Activated naive CD4-positive, alpha-beta T cell treated with anti-CD3 and anti-CD28 coated beads, Interleukin-2, amount 10 ng/mL, durations not matched to agents 7 days and 5 days (primary cell): ENCODE measurements at regions of chr5 and their contacts with region 1.

Region 1: GRCh38 chr5:32076699-32077695 is 97.1 kb downstream of the GOLPH3 start:
- DNase-seq: peak; percentile 58
- H3K4me3 Mint-ChIP-seq: no peak overlapping the region
- H3K27ac Mint-ChIP-seq: no peak overlapping the region
- H3K4me1 Mint-ChIP-seq: no peaks in the 10 kb centered on the region
- H3K27me3 Mint-ChIP-seq: no peaks in the 10 kb centered on the region

Region 2: GRCh38 chr5:31825518-31826068 is 251.4 kb before region 1 on chr5:
- CTCF ChIA-PET with region 1: interaction called, 26 read pairs
- DNase-seq: peak; percentile 55
- H3K4me3 Mint-ChIP-seq: no peak overlapping the region
- H3K27ac Mint-ChIP-seq: no peak overlapping the region
- H3K4me1 Mint-ChIP-seq: peaks cover 3% of the 10 kb centered on the region
- H3K27me3 Mint-ChIP-seq: no peaks in the 10 kb centered on the region

Region 3: GRCh38 chr5:32004404-32004803 is 72.6 kb before region 1 on chr5:
- CTCF ChIA-PET with region 1: no interaction called
- DNase-seq: no peak
- H3K4me3 Mint-ChIP-seq: no peak overlapping the region
- H3K27ac Mint-ChIP-seq: no peak overlapping the region
- H3K4me1 Mint-ChIP-seq: no peaks in the 10 kb centered on the region
- H3K27me3 Mint-ChIP-seq: peaks cover 3% of the 10 kb centered on the region

Region 4: GRCh38 chr5:32092938-32093812 is 16.2 kb after region 1 on chr5:
- CTCF ChIA-PET with region 1: interaction called, 18 read pairs
- DNase-seq: peak; percentile 73
- H3K4me3 Mint-ChIP-seq: no peak overlapping the region
- H3K27ac Mint-ChIP-seq: no peak overlapping the region
- H3K4me1 Mint-ChIP-seq: no peaks in the 10 kb centered on the region
- H3K27me3 Mint-ChIP-seq: no peaks in the 10 kb centered on the region